B cell (primary cell): ENCODE measurements at regions of chr11 and their contacts with region 1.

Region 1: GRCh38 chr11:31509429-31510345 is at the starts of genes ELP4 and IMMP1L:
- DNase-seq: peak; percentile 97
- ATAC-seq: peak; percentile 99
- H3K4me3 ChIP-seq: peak within 1 kb of the TSS; percentile 82 to 100 (median 92)
- H3K4me3 Mint-ChIP-seq: peak within 1 kb of the TSS; percentile 91
- H3K27ac ChIP-seq: peak within 1 kb of the TSS; percentile 89 to 91
- H3K27ac Mint-ChIP-seq: peak within 1 kb of the TSS; percentile 91
- H3K4me1 ChIP-seq: peaks cover 6 to 19% of the 10 kb centered on the region in 2 donors
- H3K4me1 Mint-ChIP-seq: peaks cover 38% of the 10 kb centered on the region
- H3K27me3 ChIP-seq: no peaks in the 10 kb centered on the region
- H3K27me3 Mint-ChIP-seq: no peaks in the 10 kb centered on the region
- CTCF ChIP-seq: no peak
- total RNA-seq, gene ELP4: 30.8 and 31.3 TPM in 2 replicates
- total RNA-seq, gene IMMP1L: 16.5 and 23.2 TPM in 2 replicates

Region 2: DNA sequence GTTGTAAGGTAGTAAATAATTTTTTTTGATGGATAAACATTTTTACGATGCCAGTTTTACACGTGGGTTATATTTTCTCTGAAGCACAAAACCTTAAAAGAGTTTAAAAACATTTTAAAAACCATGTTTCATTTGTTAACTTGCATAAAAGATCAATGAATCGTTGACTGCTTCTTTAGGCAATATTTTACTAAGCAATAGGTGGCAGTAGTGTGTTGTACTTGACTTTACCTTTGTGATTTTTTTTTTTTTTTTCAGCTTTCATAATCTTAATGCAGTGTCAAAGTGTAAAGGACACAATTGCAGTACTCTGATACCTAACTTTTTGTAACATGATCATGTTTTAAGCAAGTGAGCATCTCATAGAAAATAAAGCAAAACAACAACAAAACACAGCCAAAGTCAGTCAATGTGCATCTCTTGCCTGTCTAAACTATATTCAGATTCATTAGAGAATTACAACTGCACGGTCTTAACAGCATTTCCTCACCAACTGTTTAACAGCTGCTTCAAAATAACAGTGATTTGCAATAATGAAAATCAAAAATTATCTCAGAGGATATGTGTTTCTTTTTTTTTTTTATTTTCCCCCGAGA is 112.3 kb before region 1 on chr11:
- CTCF ChIA-PET with region 1: no interaction called
- POLR2A ChIA-PET with region 1: no interaction called
- intact Hi-C with region 1: no loop called
- DNase-seq: peak; percentile 13
- ATAC-seq: peak; percentile 28
- H3K4me3 ChIP-seq: no peak overlapping the region
- H3K4me3 Mint-ChIP-seq: no peak overlapping the region
- H3K27ac ChIP-seq: no peak overlapping the region
- H3K27ac Mint-ChIP-seq: no peak overlapping the region
- H3K4me1 ChIP-seq: no peaks in the 10 kb centered on the region
- H3K4me1 Mint-ChIP-seq: no peaks in the 10 kb centered on the region
- H3K27me3 ChIP-seq: no peaks in the 10 kb centered on the region
- H3K27me3 Mint-ChIP-seq: no peaks in the 10 kb centered on the region
- CTCF ChIP-seq: peak; percentile 60

Region 3: GRCh38 chr11:32583459-32584271 is 1074.0 kb after region 1 on chr11 and contains the start of gene EIF3M:
- CTCF ChIA-PET with region 1: no interaction called
- POLR2A ChIA-PET with region 1: no interaction called
- intact Hi-C with region 1: loop called (anchors 10 kb)
- DNase-seq: peak; percentile 96
- ATAC-seq: peak; percentile 99
- H3K4me3 ChIP-seq: peak within 1 kb of the TSS; percentile 84 to 97 (median 88)
- H3K4me3 Mint-ChIP-seq: peak within 1 kb of the TSS; percentile 98
- H3K27ac ChIP-seq: peak within 1 kb of the TSS; percentile 67 to 87
- H3K27ac Mint-ChIP-seq: peak within 1 kb of the TSS; percentile 97
- H3K4me1 ChIP-seq: peaks cover 18 to 20% of the 10 kb centered on the region in 2 donors
- H3K4me1 Mint-ChIP-seq: peaks cover 40% of the 10 kb centered on the region
- H3K27me3 ChIP-seq: no peaks in the 10 kb centered on the region
- H3K27me3 Mint-ChIP-seq: no peaks in the 10 kb centered on the region
- CTCF ChIP-seq: no peak
- total RNA-seq, gene EIF3M: 174 and 177 TPM in 2 replicates